OCI-LY7 (cell line): ENCODE measurements at regions of chr2 and their contacts with region 1.

Region 1: DNA sequence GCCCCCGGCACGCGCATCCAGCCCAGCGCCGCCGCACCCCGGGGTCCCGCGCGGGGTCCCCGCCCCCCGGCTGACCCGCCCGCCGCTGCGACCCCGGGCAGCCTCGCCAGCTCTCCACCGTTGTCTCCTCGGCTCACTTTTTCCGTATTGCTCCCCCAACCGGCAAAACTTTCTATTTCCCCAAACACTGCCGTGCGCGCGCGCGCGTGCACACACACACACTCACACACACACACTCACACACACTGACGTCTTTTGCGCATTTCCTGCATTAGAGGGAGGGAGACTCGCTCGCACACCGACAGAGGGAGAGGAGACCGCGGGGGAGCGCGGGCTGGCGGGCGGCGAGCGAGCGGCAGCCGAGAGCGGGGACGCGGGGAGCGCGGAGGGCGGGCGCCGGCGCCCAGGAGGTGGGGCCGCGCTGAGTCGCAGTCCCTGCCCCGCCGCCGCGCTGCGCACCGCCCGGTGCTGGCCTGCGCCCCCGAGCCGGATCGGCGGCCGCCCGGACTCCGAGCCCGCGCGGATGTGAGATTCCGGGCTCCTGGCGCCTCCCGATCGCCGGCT is 542 bp upstream of the PRKCE start:
- DNase-seq: peak; percentile 97
- H3K4me3 ChIP-seq: peak overlapping the region; percentile 89
- H3K27ac ChIP-seq: peak overlapping the region; percentile 18
- H3K4me1 ChIP-seq: peaks cover 19% of the 10 kb centered on the region
- CTCF ChIP-seq: peak; percentile 62

Region 2: GRCh38 chr2:45543257-45543656 is 107.7 kb before region 1 on chr2:
- CTCF ChIA-PET with region 1: no interaction called
- POLR2A ChIA-PET with region 1: no interaction called
- intact Hi-C with region 1: no loop called
- DNase-seq: no peak
- H3K4me3 ChIP-seq: no peak overlapping the region
- H3K27ac ChIP-seq: no peak overlapping the region
- H3K4me1 ChIP-seq: no peaks in the 10 kb centered on the region
- CTCF ChIP-seq: no peak

Region 3: GRCh38 chr2:45637440-45637839 is 13.5 kb before region 1 on chr2:
- CTCF ChIA-PET with region 1: no interaction called
- POLR2A ChIA-PET with region 1: no interaction called
- intact Hi-C with region 1: no loop called
- DNase-seq: no peak
- H3K4me3 ChIP-seq: no peak overlapping the region
- H3K27ac ChIP-seq: no peak overlapping the region
- H3K4me1 ChIP-seq: no peaks in the 10 kb centered on the region
- CTCF ChIP-seq: no peak

Region 4: DNA sequence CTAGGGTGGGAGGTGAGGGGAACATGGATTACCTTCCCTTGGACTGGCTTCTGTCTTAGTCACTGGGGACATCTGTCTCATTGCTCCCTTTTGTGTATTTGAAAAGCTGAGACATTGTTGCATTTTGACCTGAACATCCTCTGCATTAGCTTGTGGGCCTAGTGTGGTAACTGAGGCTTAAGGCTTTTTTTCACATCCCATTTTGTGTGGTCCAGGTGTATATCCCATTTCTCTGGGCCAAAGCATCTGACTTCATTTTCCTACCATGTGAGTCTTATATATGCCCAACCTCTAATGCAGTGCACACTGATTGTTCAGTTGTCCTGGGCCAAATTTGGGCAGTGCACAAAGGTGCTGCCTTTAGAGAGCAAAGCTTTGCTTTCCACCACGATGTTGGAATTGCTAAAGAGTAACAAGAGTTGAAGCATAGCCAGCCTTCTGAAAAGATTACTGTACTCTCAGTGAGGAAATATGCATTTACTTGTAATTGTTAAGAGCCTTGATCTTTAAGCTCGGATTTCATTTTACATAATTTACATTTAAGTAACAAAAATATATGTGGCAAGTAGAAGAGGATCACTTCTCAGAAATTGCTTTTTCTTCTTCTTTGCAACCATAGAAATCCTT is 13.8 kb after region 1 on chr2:
- CTCF ChIA-PET with region 1: no interaction called
- POLR2A ChIA-PET with region 1: interaction called, 10 read pairs
- intact Hi-C with region 1: no loop called
- DNase-seq: peak; percentile 22
- H3K4me3 ChIP-seq: no peak overlapping the region
- H3K27ac ChIP-seq: no peak overlapping the region
- H3K4me1 ChIP-seq: peaks cover 14% of the 10 kb centered on the region
- CTCF ChIP-seq: no peak

Region 5: GRCh38 chr2:45691171-45691999 is 40.5 kb after region 1 on chr2:
- CTCF ChIA-PET with region 1: no interaction called
- POLR2A ChIA-PET with region 1: interaction called, 3 read pairs
- intact Hi-C with region 1: loop called (anchors 5 kb)
- DNase-seq: peak; percentile 38
- H3K4me3 ChIP-seq: no peak overlapping the region
- H3K27ac ChIP-seq: no peak overlapping the region
- H3K4me1 ChIP-seq: peaks cover 26% of the 10 kb centered on the region
- CTCF ChIP-seq: no peak

Region 6: GRCh38 chr2:45743531-45744396 is 92.8 kb after region 1 on chr2:
- CTCF ChIA-PET with region 1: interaction called, 6 read pairs
- POLR2A ChIA-PET with region 1: interaction called, 3 read pairs
- intact Hi-C with region 1: loop called (anchors 5 kb)
- DNase-seq: no peak
- H3K4me3 ChIP-seq: no peak overlapping the region
- H3K27ac ChIP-seq: no peak overlapping the region
- H3K4me1 ChIP-seq: peaks cover 51% of the 10 kb centered on the region
- CTCF ChIP-seq: no peak

Region 7: DNA sequence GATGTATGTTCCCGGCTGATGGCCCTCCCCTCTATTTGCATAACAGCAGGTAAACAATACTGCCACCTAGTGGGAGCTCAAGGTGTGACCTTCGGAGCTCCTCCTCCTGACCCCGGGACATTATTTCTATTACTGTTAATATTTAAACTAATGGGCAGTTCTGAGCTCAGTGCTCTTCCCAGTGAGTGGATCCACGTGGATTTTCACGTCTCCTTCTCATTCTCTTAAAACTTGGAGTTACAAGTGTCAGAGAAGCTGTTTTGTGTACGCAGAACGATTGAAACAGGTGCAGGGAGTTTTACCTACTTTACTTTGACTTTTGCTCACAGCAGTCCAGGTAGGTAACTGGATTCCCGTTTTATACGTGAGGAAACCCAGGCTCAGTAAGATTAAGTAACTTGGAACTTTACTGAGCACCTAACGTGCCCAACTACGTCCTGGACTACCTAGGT is 127.8 kb after region 1 on chr2:
- CTCF ChIA-PET with region 1: interaction called, 3 read pairs
- POLR2A ChIA-PET with region 1: interaction called, 3 read pairs
- intact Hi-C with region 1: loop called (anchors 2 kb)
- DNase-seq: peak; percentile 82
- H3K4me3 ChIP-seq: no peak overlapping the region
- H3K27ac ChIP-seq: no peak overlapping the region
- H3K4me1 ChIP-seq: peaks cover 18% of the 10 kb centered on the region
- CTCF ChIP-seq: peak; percentile 93

Region 8: DNA sequence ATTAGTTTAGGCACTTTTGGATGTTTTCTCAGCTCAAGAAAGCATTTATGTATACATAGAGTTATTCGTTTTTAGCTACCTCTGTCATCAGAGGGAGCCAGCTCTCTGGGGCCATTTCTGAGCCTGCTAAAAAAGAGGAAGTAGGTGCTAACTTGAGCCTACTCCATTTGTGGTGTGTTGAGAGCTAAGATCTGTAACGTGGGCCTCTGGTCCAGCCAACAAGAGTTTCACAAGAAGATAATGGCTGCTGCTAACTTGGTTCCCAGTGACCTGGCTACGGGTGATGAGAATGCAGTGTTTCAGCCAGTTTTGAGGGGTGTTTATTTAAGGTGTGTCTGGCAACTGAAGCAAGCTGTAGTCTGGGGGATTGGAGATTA is 183.0 kb after region 1 on chr2:
- CTCF ChIA-PET with region 1: interaction called, 5 read pairs
- POLR2A ChIA-PET with region 1: interaction called, 6 read pairs
- intact Hi-C with region 1: loop called (anchors 1 kb)
- DNase-seq: peak; percentile 86
- H3K4me3 ChIP-seq: peak overlapping the region; percentile 32
- H3K27ac ChIP-seq: peak overlapping the region; percentile 83
- H3K4me1 ChIP-seq: peaks cover 57% of the 10 kb centered on the region
- CTCF ChIP-seq: no peak

Region 9: GRCh38 chr2:45843136-45843535 is 192.2 kb after region 1 on chr2:
- CTCF ChIA-PET with region 1: interaction called, 10 read pairs
- POLR2A ChIA-PET with region 1: interaction called, 3 read pairs
- intact Hi-C with region 1: no loop called
- DNase-seq: peak; percentile 63
- H3K4me3 ChIP-seq: no peak overlapping the region
- H3K27ac ChIP-seq: peak overlapping the region; percentile 58
- H3K4me1 ChIP-seq: peaks cover 45% of the 10 kb centered on the region
- CTCF ChIP-seq: no peak